Right cardiac atrium (tissue), 5 donors: ENCODE measurements at regions of chr12 and their contacts with region 1.

Region 1: GRCh38 chr12:133037207-133038005 is at the start of gene ZNF84:
- DNase-seq: peak; percentile 97 to 98 (median 98)
- ATAC-seq: peak; percentile 99
- H3K4me3 ChIP-seq: peak within 1 kb of the TSS; percentile 84
- H3K27ac ChIP-seq: peak within 1 kb of the TSS; percentile 91
- H3K4me1 ChIP-seq: peaks cover 2% of the 10 kb centered on the region
- H3K27me3 ChIP-seq: no peaks in the 10 kb centered on the region
- total RNA-seq, gene ZNF84: 19.5 to 23.8 (median 21.3) TPM

Region 2: DNA sequence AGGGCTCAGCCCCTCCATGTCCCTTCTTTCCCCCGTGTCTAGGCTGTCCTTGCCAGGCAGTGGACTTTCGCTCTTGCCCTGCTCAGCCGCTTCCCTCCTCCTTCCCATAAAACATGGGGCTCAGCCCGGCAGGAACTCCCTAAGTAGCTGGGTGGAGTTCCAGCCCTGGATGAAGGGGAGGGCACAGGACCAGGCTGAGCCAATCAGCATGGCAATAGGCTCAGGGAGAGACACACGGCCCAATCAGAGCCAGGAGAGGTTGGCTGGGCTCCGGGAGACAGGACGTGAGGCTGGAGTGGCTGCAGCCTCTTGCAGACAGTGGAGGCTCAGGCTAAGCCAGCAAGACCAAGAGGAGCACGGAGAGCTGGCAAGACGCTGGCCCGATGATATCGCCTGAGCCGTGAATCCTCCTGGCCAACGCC is 762.3 kb before region 1 on chr12:
- intact Hi-C with region 1: no loop called
- DNase-seq: peak in 2 of 3 donors; percentile 41 to 46
- ATAC-seq: no peak
- H3K4me3 ChIP-seq: no peak overlapping the region
- H3K27ac ChIP-seq: no peak overlapping the region
- H3K4me1 ChIP-seq: no peaks in the 10 kb centered on the region
- H3K27me3 ChIP-seq: no peaks in the 10 kb centered on the region

Region 3: DNA sequence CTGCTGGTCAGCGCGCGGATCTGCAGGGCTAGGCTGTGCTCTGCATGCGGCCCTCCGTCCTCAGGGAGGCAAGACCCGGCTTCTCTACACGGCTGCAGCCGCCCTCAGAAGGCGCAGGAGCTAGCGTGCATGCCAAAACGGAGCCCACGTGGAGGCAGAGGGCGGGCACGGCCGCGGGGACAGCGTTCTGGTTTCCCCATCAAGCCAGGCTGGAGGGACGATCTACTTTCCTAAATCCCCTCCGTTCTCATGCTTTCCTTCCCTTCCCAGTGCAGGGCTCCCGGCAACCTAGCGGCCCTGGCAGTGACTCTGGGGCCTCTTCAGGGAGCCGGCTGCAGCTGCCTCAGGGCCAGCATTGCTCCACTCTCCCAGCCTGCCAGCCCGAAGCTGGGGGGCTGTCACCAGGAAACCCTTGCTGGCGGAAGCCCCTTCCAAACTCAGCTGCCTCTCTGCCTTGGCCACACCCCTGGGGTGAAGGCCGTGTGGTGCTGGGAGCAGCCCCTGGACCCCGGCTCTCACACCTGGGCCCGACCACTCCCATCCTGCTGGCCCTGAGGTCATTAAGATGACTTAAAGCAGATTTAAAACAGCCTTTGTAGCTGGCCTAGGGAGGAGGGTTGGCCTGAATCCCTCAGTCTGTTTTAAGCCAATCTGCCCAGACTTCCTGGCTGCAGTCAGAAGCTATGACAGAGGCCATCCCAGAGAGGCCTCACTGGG is 199.6 kb before region 1 on chr12:
- intact Hi-C with region 1: no loop called
- DNase-seq: peak; percentile 50 to 82 (median 79)
- ATAC-seq: peak; percentile 65
- H3K4me3 ChIP-seq: no peak overlapping the region
- H3K27ac ChIP-seq: no peak overlapping the region
- H3K4me1 ChIP-seq: no peaks in the 10 kb centered on the region
- H3K27me3 ChIP-seq: no peaks in the 10 kb centered on the region

Region 4: GRCh38 chr12:132998741-132999140 is 38.7 kb before region 1 on chr12:
- intact Hi-C with region 1: no loop called
- DNase-seq: no peak
- ATAC-seq: no peak
- H3K4me3 ChIP-seq: no peak overlapping the region
- H3K27ac ChIP-seq: no peak overlapping the region
- H3K4me1 ChIP-seq: no peaks in the 10 kb centered on the region
- H3K27me3 ChIP-seq: no peaks in the 10 kb centered on the region

Region 5: GRCh38 chr12:133080368-133081158 is 43.2 kb after region 1 on chr12 and contains the start of gene ZNF140:
- intact Hi-C with region 1: loop called in 1 of 4 experiments (anchors 5 kb)
- DNase-seq: peak; percentile 97 to 99 (median 98)
- ATAC-seq: peak; percentile 91 to 95
- H3K4me3 ChIP-seq: peak within 1 kb of the TSS; percentile 66
- H3K27ac ChIP-seq: peak within 1 kb of the TSS; percentile 100
- H3K4me1 ChIP-seq: no peaks in the 10 kb centered on the region
- H3K27me3 ChIP-seq: no peaks in the 10 kb centered on the region
- total RNA-seq, gene ZNF140: 8.5 to 10.7 (median 10.0) TPM

Region 6: DNA sequence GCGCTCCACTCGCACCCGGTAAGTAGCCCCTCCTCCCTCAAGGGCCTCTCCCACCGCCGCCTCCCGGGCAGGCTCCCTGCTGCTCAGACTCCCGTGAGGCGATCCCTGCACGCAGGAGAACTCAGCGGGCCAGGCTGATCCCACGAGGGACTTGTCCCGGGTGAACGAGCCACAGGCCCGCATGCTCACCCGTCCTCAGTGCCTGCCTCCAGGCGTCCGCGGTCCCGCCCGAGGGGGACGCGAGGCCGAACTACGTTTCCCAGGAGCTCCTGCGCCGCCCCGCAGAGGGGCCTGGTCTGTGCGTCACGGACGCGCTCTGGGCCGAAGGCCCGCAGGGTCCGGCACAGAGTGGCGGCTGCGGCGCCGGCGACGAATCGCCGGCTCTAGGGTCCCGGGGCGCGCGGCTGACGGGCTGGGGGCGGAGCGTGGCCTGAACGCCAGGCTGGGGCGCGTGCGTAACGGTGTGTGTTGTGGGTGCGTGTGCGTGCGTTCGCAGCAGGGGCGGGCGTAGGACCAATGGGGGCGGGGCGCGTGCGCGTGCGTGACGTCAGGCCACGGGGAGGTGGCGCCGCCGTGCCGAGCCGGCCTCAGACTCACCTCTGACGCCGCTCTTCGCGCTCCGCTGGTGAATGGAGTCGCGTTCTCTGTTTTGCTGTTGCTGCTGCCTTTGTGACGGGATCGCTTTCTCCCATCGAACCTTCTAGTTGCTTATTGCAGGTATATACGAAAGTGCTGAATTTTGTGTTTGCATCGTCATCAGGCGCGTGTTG is 92.8 kb after region 1 on chr12 and contains the starts of genes ZNF10 and ZNF891:
- intact Hi-C with region 1: loop called in 1 of 4 experiments (anchors 2 kb)
- DNase-seq: peak; percentile 97 to 99 (median 99)
- ATAC-seq: peak; percentile 99
- H3K4me3 ChIP-seq: peak within 1 kb of the TSS; percentile 77
- H3K27ac ChIP-seq: peak within 1 kb of the TSS; percentile 80
- H3K4me1 ChIP-seq: no peaks in the 10 kb centered on the region
- H3K27me3 ChIP-seq: no peaks in the 10 kb centered on the region
- total RNA-seq, gene ZNF10: 7.7 to 11.4 (median 10.4) TPM
- total RNA-seq, gene ZNF891: 1.2 to 1.5 (median 1.3) TPM